GM12878 (cell line): ENCODE measurements at regions of chr11 and their contacts with region 1.

Region 1: GRCh38 chr11:4704054-4704789 is at the start of gene MMP26:
- DNase-seq: no peak
- ATAC-seq: peak; percentile 44
- H3K4me3 ChIP-seq: no peak within 1 kb of the TSS
- H3K27ac ChIP-seq: no peak within 1 kb of the TSS
- H3K4me1 ChIP-seq: no peaks in the 10 kb centered on the region; the same call in none of the 2 replicates
- H3K27me3 ChIP-seq: no peaks in the 10 kb centered on the region; a peak in 1 of 4 replicates
- CTCF ChIP-seq: no peak
- EP300 ChIP-seq: no peak
- POLR2A ChIP-seq: no peak
- RAD21 ChIP-seq: no peak
- polyA plus RNA-seq, gene MMP26: not detected

Region 2: GRCh38 chr11:4680341-4680740 is 23.9 kb before region 1 on chr11:
- CTCF ChIA-PET with region 1: no interaction called
- POLR2A ChIA-PET with region 1: no interaction called
- RAD21 ChIA-PET with region 1: no interaction called
- SMC1A ChIA-PET with region 1: no interaction called
- in situ Hi-C with region 1: no loop called
- intact Hi-C with region 1: no loop called
- DNase-seq: no peak
- ATAC-seq: no peak
- H3K4me3 ChIP-seq: no peak overlapping the region
- H3K27ac ChIP-seq: no peak overlapping the region
- H3K4me1 ChIP-seq: no peaks in the 10 kb centered on the region
- H3K27me3 ChIP-seq: no peaks in the 10 kb centered on the region
- CTCF ChIP-seq: no peak
- EP300 ChIP-seq: no peak
- POLR2A ChIP-seq: no peak
- RAD21 ChIP-seq: no peak

Region 3: DNA sequence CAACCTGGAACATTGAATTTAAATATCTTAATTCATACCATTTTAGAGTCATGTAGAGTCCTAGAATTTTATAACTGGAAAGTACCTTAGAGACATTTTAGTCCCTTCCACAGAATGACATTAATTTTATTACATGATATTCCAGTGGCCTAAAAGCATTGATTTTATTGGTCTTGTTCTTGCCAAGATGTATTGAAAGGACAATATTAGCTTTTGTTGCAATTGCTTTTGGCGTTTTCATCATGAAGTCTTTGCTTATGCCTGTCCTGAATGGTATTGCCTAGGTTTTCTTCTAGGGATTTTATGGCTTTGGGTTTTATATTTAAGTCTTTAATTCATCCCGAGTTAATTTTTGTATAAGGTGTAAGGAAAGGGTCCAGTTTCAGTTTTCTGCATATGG is 36.5 kb after region 1 on chr11:
- CTCF ChIA-PET with region 1: no interaction called
- POLR2A ChIA-PET with region 1: no interaction called
- RAD21 ChIA-PET with region 1: no interaction called
- SMC1A ChIA-PET with region 1: no interaction called
- in situ Hi-C with region 1: no loop called
- intact Hi-C with region 1: loop called (anchors 5 kb)
- DNase-seq: no peak
- ATAC-seq: no peak
- H3K4me3 ChIP-seq: no peak overlapping the region
- H3K27ac ChIP-seq: no peak overlapping the region
- H3K4me1 ChIP-seq: no peaks in the 10 kb centered on the region
- H3K27me3 ChIP-seq: no peaks in the 10 kb centered on the region
- CTCF ChIP-seq: no peak
- EP300 ChIP-seq: no peak
- POLR2A ChIP-seq: no peak
- RAD21 ChIP-seq: no peak

Region 4: GRCh38 chr11:4751201-4751600 is 47.0 kb after region 1 on chr11:
- CTCF ChIA-PET with region 1: no interaction called
- POLR2A ChIA-PET with region 1: no interaction called
- RAD21 ChIA-PET with region 1: no interaction called
- SMC1A ChIA-PET with region 1: no interaction called
- in situ Hi-C with region 1: no loop called
- intact Hi-C with region 1: loop called (anchors 5 kb)
- DNase-seq: no peak
- ATAC-seq: no peak
- H3K4me3 ChIP-seq: no peak overlapping the region
- H3K27ac ChIP-seq: no peak overlapping the region
- H3K4me1 ChIP-seq: no peaks in the 10 kb centered on the region
- H3K27me3 ChIP-seq: no peaks in the 10 kb centered on the region
- CTCF ChIP-seq: no peak
- EP300 ChIP-seq: no peak
- POLR2A ChIP-seq: no peak
- RAD21 ChIP-seq: no peak

Region 5: DNA sequence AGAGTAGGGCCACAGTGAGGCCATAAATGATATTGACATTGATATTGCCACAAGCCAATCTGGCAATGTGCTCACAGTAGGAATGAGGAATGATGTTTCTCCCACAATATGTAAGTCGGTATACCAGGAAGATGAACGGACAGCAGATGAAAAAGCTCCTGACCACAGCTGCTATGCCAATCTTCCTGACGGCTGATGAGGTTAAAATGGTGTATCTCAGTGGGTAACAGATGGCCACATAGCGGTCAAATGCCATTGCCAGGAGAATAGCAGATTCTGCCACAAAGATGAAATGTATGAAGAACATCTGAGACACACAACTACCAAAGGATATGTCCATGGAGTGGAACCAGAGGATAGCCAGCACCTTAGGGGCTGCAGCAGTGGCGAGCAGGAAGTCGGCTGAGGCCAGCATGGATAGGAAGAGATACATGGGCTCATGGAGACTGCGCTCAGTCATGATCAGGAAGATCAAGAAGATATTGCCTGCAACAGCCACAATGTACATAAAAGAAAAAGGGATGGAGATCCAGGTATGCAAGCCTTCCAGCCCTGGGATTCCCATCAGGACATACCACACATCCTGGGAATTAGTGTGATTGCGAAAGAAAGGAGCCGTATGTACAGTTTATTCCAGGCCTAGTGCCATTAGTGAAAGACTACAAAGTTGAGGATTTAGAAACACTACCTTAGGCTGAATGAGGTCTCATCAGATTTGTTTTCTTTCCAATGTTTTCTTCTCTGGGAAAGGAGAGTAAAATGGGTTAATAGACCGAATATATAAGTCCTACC is 474.0 kb after region 1 on chr11:
- CTCF ChIA-PET with region 1: no interaction called
- POLR2A ChIA-PET with region 1: no interaction called
- RAD21 ChIA-PET with region 1: no interaction called
- SMC1A ChIA-PET with region 1: no interaction called
- in situ Hi-C with region 1: no loop called
- intact Hi-C with region 1: no loop called
- DNase-seq: no peak
- ATAC-seq: no peak
- H3K4me3 ChIP-seq: no peak overlapping the region
- H3K27ac ChIP-seq: no peak overlapping the region
- H3K4me1 ChIP-seq: no peaks in the 10 kb centered on the region
- H3K27me3 ChIP-seq: no peaks in the 10 kb centered on the region; a peak in 1 of 4 replicates
- CTCF ChIP-seq: no peak
- EP300 ChIP-seq: no peak
- POLR2A ChIP-seq: no peak
- RAD21 ChIP-seq: no peak